Sciatic nerve (tissue), 2 donors: ENCODE measurements at regions of chr19 and their contacts with region 1.

Region 1: DNA sequence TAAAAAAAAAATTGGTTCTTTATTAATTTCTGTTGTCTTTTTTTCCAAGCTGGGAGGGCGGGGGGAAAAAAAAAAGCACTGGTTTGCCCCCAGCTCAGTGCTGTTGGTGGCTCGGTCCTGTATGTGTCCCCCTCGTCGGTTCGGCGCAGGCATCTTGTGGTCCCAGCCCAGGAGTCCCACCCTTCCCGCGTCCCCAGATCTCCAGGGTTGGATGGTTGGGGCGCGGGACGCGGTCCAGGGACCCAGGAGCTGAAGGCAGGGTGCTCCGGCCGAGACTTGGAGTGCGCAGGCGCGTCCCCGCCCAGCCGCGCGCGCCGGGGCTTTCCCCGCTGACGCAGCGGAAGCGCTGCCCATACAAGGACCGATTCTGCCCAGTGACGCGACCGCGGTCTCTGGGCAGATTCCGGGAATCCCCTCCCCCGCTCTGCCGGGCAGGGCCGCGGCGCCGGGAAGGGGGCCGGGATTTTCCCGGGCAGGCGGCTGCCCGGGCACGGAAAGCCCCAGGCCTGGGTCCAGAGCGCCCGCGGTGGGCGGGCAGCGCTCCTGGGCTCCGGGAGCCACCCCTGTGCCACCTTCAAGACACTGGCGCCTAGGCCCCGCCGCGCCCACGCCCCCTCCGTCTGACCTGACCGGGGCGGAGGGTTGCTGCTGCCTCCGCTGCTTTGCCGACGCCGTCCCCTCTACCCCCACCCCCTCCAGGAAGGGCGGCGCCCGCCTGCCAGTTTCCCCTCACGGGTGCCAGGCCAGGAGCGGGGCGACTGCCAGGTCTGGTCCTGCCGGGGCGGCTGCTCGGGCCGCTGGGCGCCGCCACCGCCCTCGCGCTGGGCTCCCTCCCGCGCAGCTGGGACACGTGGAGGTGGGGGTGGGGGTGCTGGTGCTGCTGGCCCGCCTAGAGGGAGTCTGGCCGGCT is 2.3 kb downstream of the JUNB start:
- DNase-seq: peak; percentile 97
- ATAC-seq: peak; percentile 64

Region 2: GRCh38 chr19:12777217-12778016 is 16.1 kb before region 1 on chr19:
- intact Hi-C with region 1: loop called (anchors 2 kb)
- DNase-seq: peak; percentile 91
- ATAC-seq: peak; percentile 68

Region 3: GRCh38 chr19:14614099-14614412 is 1820.5 kb after region 1 on chr19:
- intact Hi-C with region 1: no loop called
- DNase-seq: no peak
- ATAC-seq: no peak